ENCODE measurements at regions of chrX and their contacts with region 1.

Region 1: GRCh38 chrX:40169193-40170101 is 71.7 kb upstream of the BCOR start:
- DNase-seq: no peak
- ATAC-seq: peak; percentile 64
- H3K4me3 ChIP-seq: peak overlapping the region; percentile 49; the same call in 1 of the 2 replicates
- H3K27ac ChIP-seq: peak overlapping the region; percentile 58
- H3K4me1 ChIP-seq: peaks cover 13% of the 10 kb centered on the region; the same call in 1 of the 2 replicates
- H3K27me3 ChIP-seq: no peaks in the 10 kb centered on the region
- CTCF ChIP-seq: peak; percentile 46 to 63 (median 49); a peak in 5 of 6 replicates
- EP300 ChIP-seq: no peak; a peak in 1 of 4 replicates
- POLR2A ChIP-seq: no peak; the same call in 1 of the 2 replicates
- RAD21 ChIP-seq: peak; percentile 71

Region 2: DNA sequence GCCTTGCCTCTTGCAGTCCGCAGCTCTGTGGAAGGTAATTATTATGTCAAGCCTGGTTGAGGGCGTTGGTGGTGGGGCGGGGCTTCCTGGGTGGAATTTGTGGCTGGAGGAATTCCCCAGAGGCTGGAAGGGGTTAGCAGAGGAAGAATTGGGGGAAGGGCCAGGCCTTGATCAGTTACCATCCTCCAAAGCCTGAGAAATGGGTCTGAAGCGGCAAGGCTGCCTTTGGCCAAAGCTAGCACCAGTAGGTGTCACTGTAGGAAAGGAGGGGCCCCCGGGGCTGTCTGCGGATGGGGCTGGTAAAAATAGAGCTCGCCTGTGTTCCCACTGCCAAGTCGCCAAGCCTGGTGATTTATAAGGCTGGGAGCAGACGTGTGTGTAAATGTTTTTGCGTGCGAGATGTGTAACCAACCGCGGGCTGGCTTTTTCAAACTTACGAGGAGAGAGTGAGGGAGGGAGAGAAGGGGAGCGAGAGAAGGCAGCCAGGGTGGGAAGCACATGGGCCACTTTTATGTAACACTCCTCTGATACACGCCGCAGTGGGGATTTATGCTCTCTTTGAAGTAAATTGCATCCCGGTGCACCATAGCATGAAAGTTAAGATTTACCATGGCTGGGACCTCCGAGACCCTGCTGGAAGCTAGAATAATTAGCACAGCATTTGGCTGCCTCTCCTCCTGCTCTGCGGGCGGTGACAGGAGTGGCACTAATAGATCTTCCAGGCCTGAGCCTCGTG is 438.6 kb before region 1 on chrX:
- CTCF ChIA-PET with region 1: no interaction called
- POLR2A ChIA-PET with region 1: no interaction called
- RAD21 ChIA-PET with region 1: no interaction called
- SMC1A ChIA-PET with region 1: no interaction called
- in situ Hi-C with region 1: no loop called
- intact Hi-C with region 1: loop called (anchors 2 kb)
- DNase-seq: no peak
- ATAC-seq: peak; percentile 91
- H3K4me3 ChIP-seq: no peak overlapping the region
- H3K27ac ChIP-seq: no peak overlapping the region
- H3K4me1 ChIP-seq: no peaks in the 10 kb centered on the region
- H3K27me3 ChIP-seq: peaks cover 1 to 3% of the 10 kb centered on the region in 2 experiments; a peak in 2 of 4 replicates
- CTCF ChIP-seq: peak; percentile 55 to 60 (median 56)
- EP300 ChIP-seq: no peak
- POLR2A ChIP-seq: no peak
- RAD21 ChIP-seq: peak; percentile 75

Region 3: DNA sequence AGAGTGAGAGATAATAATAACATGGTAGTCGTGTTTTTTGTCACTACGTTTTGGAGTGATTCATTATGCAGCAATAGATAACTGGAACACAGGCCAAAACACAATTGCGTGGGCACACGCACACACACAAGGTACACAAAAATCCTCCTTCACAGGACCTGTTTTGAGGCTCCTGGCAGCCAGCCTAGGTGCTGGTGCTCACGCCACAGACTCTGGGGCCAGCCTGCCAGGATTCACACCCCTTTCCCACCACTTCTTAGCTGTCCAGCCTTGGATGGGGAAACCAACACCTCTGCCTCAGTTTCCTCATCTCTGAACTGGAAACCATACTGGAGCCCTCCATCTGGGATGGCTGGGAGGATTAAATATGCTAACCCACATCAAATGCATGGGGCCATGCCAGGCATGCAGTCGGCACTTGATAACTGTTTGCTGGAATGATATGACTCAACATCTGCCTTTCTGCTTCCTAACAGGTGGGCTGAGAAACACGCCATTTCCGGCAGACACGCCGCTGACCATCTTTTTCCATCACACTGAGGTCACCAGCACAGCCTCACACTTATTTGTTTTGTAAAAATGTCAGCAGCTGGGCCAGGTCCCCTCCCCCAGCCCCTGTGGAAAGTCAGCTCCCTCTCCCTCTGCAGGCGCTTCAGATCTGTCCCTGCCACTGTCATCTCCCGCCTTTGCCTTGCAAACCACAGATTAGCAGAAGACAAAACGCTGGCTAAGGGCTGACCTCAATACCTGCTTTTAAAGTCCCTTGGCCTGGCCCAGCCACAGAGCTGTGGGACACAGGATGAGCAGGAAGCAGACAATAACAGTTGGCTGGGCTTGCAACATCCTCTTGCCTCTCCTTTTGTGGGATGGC is 309.2 kb before region 1 on chrX:
- CTCF ChIA-PET with region 1: no interaction called
- POLR2A ChIA-PET with region 1: no interaction called
- RAD21 ChIA-PET with region 1: no interaction called
- SMC1A ChIA-PET with region 1: no interaction called
- in situ Hi-C with region 1: no loop called
- intact Hi-C with region 1: loop called (anchors 10 kb)
- DNase-seq: peak; percentile 89
- ATAC-seq: peak; percentile 72
- H3K4me3 ChIP-seq: no peak overlapping the region
- H3K27ac ChIP-seq: peak overlapping the region; percentile 55
- H3K4me1 ChIP-seq: peaks cover 48% of the 10 kb centered on the region
- H3K27me3 ChIP-seq: no peaks in the 10 kb centered on the region
- CTCF ChIP-seq: no peak
- EP300 ChIP-seq: peak; percentile 91 to 98
- POLR2A ChIP-seq: no peak
- RAD21 ChIP-seq: no peak

Region 4: GRCh38 chrX:40153335-40154249 is 15.9 kb before region 1 on chrX:
- CTCF ChIA-PET with region 1: no interaction called
- POLR2A ChIA-PET with region 1: no interaction called
- RAD21 ChIA-PET with region 1: no interaction called
- SMC1A ChIA-PET with region 1: no interaction called
- in situ Hi-C with region 1: no loop called
- intact Hi-C with region 1: no loop called
- DNase-seq: no peak
- ATAC-seq: peak; percentile 81
- H3K4me3 ChIP-seq: peak overlapping the region; percentile 39; the same call in 1 of the 2 replicates
- H3K27ac ChIP-seq: no peak overlapping the region
- H3K4me1 ChIP-seq: peaks cover 12% of the 10 kb centered on the region
- H3K27me3 ChIP-seq: no peaks in the 10 kb centered on the region
- CTCF ChIP-seq: no peak; a peak in 1 of 6 replicates
- EP300 ChIP-seq: no peak
- POLR2A ChIP-seq: no peak; the same call in 1 of the 2 replicates
- RAD21 ChIP-seq: peak; percentile 18; the same call in 1 of the 2 replicates

Region 5: DNA sequence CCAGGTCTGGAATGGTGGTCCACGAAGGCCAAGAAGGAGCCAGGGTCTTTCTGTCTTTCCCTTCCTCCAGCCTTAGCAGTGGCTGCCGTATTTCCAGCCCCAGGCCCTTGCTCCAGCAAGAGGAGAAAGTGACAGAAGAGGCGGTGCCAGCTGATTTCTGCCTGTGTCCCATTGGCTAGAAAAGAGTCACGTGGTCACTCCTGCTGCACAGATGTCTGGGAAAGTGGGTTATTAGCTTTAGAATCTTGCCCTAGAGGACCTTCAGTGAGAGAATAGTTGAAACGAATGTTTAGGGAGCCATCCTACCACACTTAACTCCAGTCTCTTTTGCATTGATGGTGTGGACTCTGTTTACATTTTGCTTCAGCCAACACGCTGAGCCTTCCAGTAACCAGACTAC is 27.6 kb after region 1 on chrX:
- CTCF ChIA-PET with region 1: no interaction called
- POLR2A ChIA-PET with region 1: no interaction called
- RAD21 ChIA-PET with region 1: no interaction called
- SMC1A ChIA-PET with region 1: no interaction called
- in situ Hi-C with region 1: no loop called
- intact Hi-C with region 1: no loop called
- DNase-seq: no peak
- ATAC-seq: no peak
- H3K4me3 ChIP-seq: no peak overlapping the region
- H3K27ac ChIP-seq: no peak overlapping the region
- H3K4me1 ChIP-seq: peaks cover 8% of the 10 kb centered on the region; the same call in 1 of the 2 replicates
- H3K27me3 ChIP-seq: no peaks in the 10 kb centered on the region
- CTCF ChIP-seq: no peak
- EP300 ChIP-seq: no peak
- POLR2A ChIP-seq: no peak
- RAD21 ChIP-seq: no peak

Region 6: GRCh38 chrX:40207626-40208025 is 38.2 kb after region 1 on chrX:
- CTCF ChIA-PET with region 1: no interaction called
- POLR2A ChIA-PET with region 1: no interaction called
- RAD21 ChIA-PET with region 1: no interaction called
- SMC1A ChIA-PET with region 1: no interaction called
- in situ Hi-C with region 1: no loop called
- intact Hi-C with region 1: loop called (anchors 5 kb)
- DNase-seq: no peak
- ATAC-seq: peak; percentile 70
- H3K4me3 ChIP-seq: no peak overlapping the region
- H3K27ac ChIP-seq: no peak overlapping the region
- H3K4me1 ChIP-seq: peaks cover 8% of the 10 kb centered on the region; the same call in 1 of the 2 replicates
- H3K27me3 ChIP-seq: no peaks in the 10 kb centered on the region
- CTCF ChIP-seq: no peak
- EP300 ChIP-seq: no peak
- POLR2A ChIP-seq: no peak
- RAD21 ChIP-seq: no peak

Region 7: GRCh38 chrX:40300286-40300925 is 131.0 kb after region 1 on chrX:
- CTCF ChIA-PET with region 1: no interaction called
- POLR2A ChIA-PET with region 1: no interaction called
- RAD21 ChIA-PET with region 1: no interaction called
- SMC1A ChIA-PET with region 1: no interaction called
- in situ Hi-C with region 1: no loop called
- intact Hi-C with region 1: loop called (anchors 5 kb)
- DNase-seq: no peak
- ATAC-seq: peak; percentile 79
- H3K4me3 ChIP-seq: no peak overlapping the region
- H3K27ac ChIP-seq: peak overlapping the region; percentile 38; the same call in 1 of the 2 replicates
- H3K4me1 ChIP-seq: peaks cover 16% of the 10 kb centered on the region
- H3K27me3 ChIP-seq: no peaks in the 10 kb centered on the region
- CTCF ChIP-seq: no peak
- EP300 ChIP-seq: no peak
- POLR2A ChIP-seq: no peak
- RAD21 ChIP-seq: no peak